H1 (cell line): ENCODE measurements at regions of chr15 and their contacts with region 1.

Region 1: GRCh38 chr15:67165254-67166253 is 88.9 kb downstream of the AAGAB start:
- DNase-seq: peak; percentile 69 to 80
- H3K4me3 ChIP-seq: peak overlapping the region in 3 of 4 experiments; percentile 5 to 30 (median 11); a peak in 3 of 8 replicates
- H3K27ac ChIP-seq: no peak overlapping the region; the same call in 1 of the 2 replicates
- H3K4me1 ChIP-seq: peaks cover 15 to 31% (median 22%) of the 10 kb centered on the region in 4 experiments
- H3K27me3 ChIP-seq: peaks cover 0 to 2% (median 0%) of the 10 kb centered on the region in 4 experiments; a peak in 1 of 7 replicates
- CTCF ChIP-seq: no peak
- EP300 ChIP-seq: no peak
- POLR2A ChIP-seq: no peak
- RAD21 ChIP-seq: no peak

Region 2: GRCh38 chr15:67120839-67121643 is 44.5 kb before region 1 on chr15:
- CTCF ChIA-PET with region 1: interaction called, 12 read pairs
- POLR2A ChIA-PET with region 1: no interaction called
- DNase-seq: no peak
- H3K4me3 ChIP-seq: no peak overlapping the region
- H3K27ac ChIP-seq: no peak overlapping the region
- H3K4me1 ChIP-seq: peaks cover 0 to 2% (median 0%) of the 10 kb centered on the region in 4 experiments; a peak in 3 of 7 replicates
- H3K27me3 ChIP-seq: no peaks in the 10 kb centered on the region
- CTCF ChIP-seq: no peak
- EP300 ChIP-seq: no peak
- POLR2A ChIP-seq: no peak
- RAD21 ChIP-seq: no peak